ENCODE measurements at regions of chr5 and their contacts with region 1.

Region 1: GRCh38 chr5:139262742-139263445 is 30.6 kb upstream of the MATR3 start:
- DNase-seq: peak; percentile 79
- H3K4me3 ChIP-seq: no peak overlapping the region
- H3K27ac ChIP-seq: no peak overlapping the region
- H3K4me1 ChIP-seq: peaks cover 6% of the 10 kb centered on the region
- H3K27me3 ChIP-seq: no peaks in the 10 kb centered on the region
- CTCF ChIP-seq: peak; percentile 90 to 98

Region 2: GRCh38 chr5:138464008-138464387 is 798.9 kb before region 1 on chr5:
- CTCF ChIA-PET with region 1: no interaction called
- dilution Hi-C with region 1: no loop called
- in situ Hi-C with region 1: no loop called
- intact Hi-C with region 1: loop called (anchors 5 kb)
- DNase-seq: peak; percentile 94
- H3K4me3 ChIP-seq: peak overlapping the region; percentile 66 to 90 (median 83)
- H3K27ac ChIP-seq: peak overlapping the region; percentile 84
- H3K4me1 ChIP-seq: peaks cover 45% of the 10 kb centered on the region
- H3K27me3 ChIP-seq: no peaks in the 10 kb centered on the region
- CTCF ChIP-seq: peak; percentile 58 to 71

Region 3: GRCh38 chr5:138641547-138642298 is 621.2 kb before region 1 on chr5:
- CTCF ChIA-PET with region 1: no interaction called
- dilution Hi-C with region 1: no loop called
- in situ Hi-C with region 1: no loop called
- intact Hi-C with region 1: loop called (anchors 1 kb)
- DNase-seq: peak; percentile 51
- H3K4me3 ChIP-seq: no peak overlapping the region
- H3K27ac ChIP-seq: no peak overlapping the region
- H3K4me1 ChIP-seq: peaks cover 5% of the 10 kb centered on the region
- H3K27me3 ChIP-seq: no peaks in the 10 kb centered on the region
- CTCF ChIP-seq: peak; percentile 77 to 79

Region 4: DNA sequence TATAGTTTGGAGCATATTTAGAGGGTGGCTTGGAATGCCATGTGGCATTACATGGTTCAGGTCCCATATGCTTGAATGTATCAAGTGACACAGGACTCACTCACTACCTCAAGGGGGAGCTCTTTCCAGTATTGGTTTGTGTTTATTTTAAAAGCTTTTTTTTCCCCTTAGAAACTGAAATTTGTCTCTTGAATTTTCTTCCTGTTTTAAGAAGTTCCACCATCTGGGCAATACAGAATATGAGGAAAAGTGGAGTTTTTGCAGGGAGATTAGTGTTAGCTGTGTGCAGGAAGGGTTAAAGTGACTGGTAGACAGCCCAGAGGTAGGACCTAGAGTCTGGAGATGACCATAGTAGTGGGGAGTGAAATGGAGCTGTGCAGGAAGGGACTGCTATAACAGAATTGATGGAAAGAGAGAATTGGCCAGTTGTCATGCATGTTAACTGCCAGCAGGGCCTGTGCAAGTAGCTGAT is 473.1 kb before region 1 on chr5:
- CTCF ChIA-PET with region 1: no interaction called
- dilution Hi-C with region 1: no loop called
- in situ Hi-C with region 1: no loop called
- intact Hi-C with region 1: loop called (anchors 1 kb)
- DNase-seq: peak; percentile 9
- H3K4me3 ChIP-seq: no peak overlapping the region
- H3K27ac ChIP-seq: no peak overlapping the region
- H3K4me1 ChIP-seq: no peaks in the 10 kb centered on the region
- H3K27me3 ChIP-seq: no peaks in the 10 kb centered on the region
- CTCF ChIP-seq: peak; percentile 56 to 65

Region 5: GRCh38 chr5:138932171-138932810 is 330.6 kb before region 1 on chr5:
- CTCF ChIA-PET with region 1: no interaction called
- dilution Hi-C with region 1: no loop called
- in situ Hi-C with region 1: no loop called
- intact Hi-C with region 1: loop called (anchors 5 kb)
- DNase-seq: no peak
- H3K4me3 ChIP-seq: no peak overlapping the region
- H3K27ac ChIP-seq: no peak overlapping the region
- H3K4me1 ChIP-seq: no peaks in the 10 kb centered on the region
- H3K27me3 ChIP-seq: no peaks in the 10 kb centered on the region
- CTCF ChIP-seq: no peak

Region 6: GRCh38 chr5:139147483-139148087 is 115.3 kb before region 1 on chr5:
- CTCF ChIA-PET with region 1: no interaction called
- dilution Hi-C with region 1: no loop called
- in situ Hi-C with region 1: no loop called
- intact Hi-C with region 1: loop called (anchors 5 kb)
- DNase-seq: peak; percentile 52
- H3K4me3 ChIP-seq: no peak overlapping the region
- H3K27ac ChIP-seq: no peak overlapping the region
- H3K4me1 ChIP-seq: peaks cover 42% of the 10 kb centered on the region
- H3K27me3 ChIP-seq: no peaks in the 10 kb centered on the region
- CTCF ChIP-seq: no peak